ENCODE measurements at regions of chr2 and their contacts with region 1.

Region 1: GRCh38 chr2:38515160-38516074 is 87.3 kb downstream of the HNRNPLL start:
- DNase-seq: no peak
- ATAC-seq: no peak
- H3K4me3 ChIP-seq: no peak overlapping the region
- H3K4me3 Mint-ChIP-seq: no peak overlapping the region
- H3K27ac ChIP-seq: no peak overlapping the region
- H3K27ac Mint-ChIP-seq: no peak overlapping the region
- H3K4me1 ChIP-seq: no peaks in the 10 kb centered on the region
- H3K4me1 Mint-ChIP-seq: no peaks in the 10 kb centered on the region
- H3K27me3 ChIP-seq: peaks cover 0 to 8% of the 10 kb centered on the region in 2 experiments
- H3K27me3 Mint-ChIP-seq: peaks cover 3 to 7% of the 10 kb centered on the region in 2 donors

Region 2: DNA sequence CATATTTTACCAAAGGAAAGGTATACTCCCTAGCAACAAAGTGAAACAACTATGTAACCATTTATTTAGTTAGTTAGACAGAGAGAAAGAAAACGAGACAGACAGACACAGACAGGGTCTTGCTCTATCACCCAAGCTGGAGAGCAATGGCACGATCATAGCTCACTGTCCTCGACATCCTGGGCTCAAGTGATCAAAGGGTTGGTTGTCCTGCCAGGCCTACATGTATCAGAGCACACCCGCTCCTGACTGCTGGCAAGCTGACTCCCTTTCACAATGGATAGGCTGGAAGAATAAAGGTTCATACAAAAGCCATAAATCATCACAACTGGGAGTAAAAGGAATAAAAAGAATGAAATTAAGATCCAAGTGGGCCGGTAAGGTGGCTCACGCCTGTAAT is 191.8 kb before region 1 on chr2:
- CTCF ChIA-PET with region 1: interaction called in 1 of 2 experiments, 4 read pairs
- POLR2A ChIA-PET with region 1: interaction called in 1 of 2 experiments, 13 read pairs
- DNase-seq: no peak
- ATAC-seq: no peak
- H3K4me3 ChIP-seq: no peak overlapping the region
- H3K4me3 Mint-ChIP-seq: no peak overlapping the region
- H3K27ac ChIP-seq: no peak overlapping the region
- H3K27ac Mint-ChIP-seq: no peak overlapping the region
- H3K4me1 ChIP-seq: peaks cover 0 to 8% of the 10 kb centered on the region in 2 experiments
- H3K4me1 Mint-ChIP-seq: peaks cover 35 to 37% (median 35%) of the 10 kb centered on the region in 3 donors
- H3K27me3 ChIP-seq: no peaks in the 10 kb centered on the region
- H3K27me3 Mint-ChIP-seq: no peaks in the 10 kb centered on the region

Region 3: GRCh38 chr2:38444247-38444646 is 71.2 kb before region 1 on chr2:
- CTCF ChIA-PET with region 1: no interaction called
- POLR2A ChIA-PET with region 1: no interaction called
- DNase-seq: no peak
- ATAC-seq: no peak
- H3K4me3 ChIP-seq: no peak overlapping the region
- H3K4me3 Mint-ChIP-seq: no peak overlapping the region
- H3K27ac ChIP-seq: no peak overlapping the region
- H3K27ac Mint-ChIP-seq: no peak overlapping the region
- H3K4me1 ChIP-seq: no peaks in the 10 kb centered on the region
- H3K4me1 Mint-ChIP-seq: no peaks in the 10 kb centered on the region
- H3K27me3 ChIP-seq: peaks cover 0 to 9% of the 10 kb centered on the region in 2 experiments
- H3K27me3 Mint-ChIP-seq: peaks cover 16 to 18% of the 10 kb centered on the region in 2 donors